ENCODE measurements at regions of chr6 and their contacts with region 1.

Region 1: DNA sequence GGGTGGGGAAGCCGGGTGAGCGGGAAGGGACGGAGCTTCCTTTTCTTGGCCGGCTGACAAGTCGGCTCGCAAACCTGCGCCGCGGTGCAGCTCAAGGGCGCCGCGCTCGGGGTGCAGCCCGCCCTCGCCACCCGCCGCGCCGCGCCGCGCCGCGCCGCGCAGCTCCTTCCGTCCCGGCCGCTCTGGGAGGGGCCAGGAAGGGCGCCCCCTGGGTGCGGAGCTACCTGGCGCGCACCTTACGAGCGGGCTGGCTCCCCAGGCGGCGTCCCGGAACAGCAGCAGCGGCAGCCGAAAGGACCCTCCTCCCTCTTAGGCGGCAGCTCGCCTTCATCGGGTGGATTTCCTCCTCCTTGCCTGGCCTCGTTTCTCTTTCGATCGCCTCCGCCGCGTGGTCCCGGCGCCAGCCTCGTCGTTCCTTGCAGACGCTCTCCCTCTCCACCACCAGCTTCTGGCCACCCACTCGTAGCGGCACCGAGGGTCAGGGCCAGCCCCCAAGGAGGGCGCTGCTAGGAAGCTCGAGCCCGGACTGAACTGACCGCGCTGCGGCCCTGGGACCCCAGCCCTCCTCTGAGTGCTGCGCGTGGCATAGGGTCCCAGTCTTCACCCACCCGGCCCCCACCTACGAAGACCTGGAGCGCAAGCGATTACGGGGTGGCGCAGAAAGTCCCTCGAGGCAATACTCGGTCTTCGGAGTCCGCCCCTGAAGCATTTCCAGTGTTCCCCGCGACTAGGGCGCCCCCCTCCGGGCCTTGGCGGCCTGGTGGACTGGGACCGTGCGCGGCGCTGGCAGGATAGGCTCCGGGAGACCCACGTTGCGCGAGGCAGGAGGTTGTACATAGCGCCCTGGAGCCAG is at the start of gene MAP3K5:
- H3K4me3 ChIP-seq: peak within 1 kb of the TSS; percentile 54
- H3K27ac ChIP-seq: peak within 1 kb of the TSS; percentile 89
- H3K4me1 ChIP-seq: peaks cover 13% of the 10 kb centered on the region
- CTCF ChIP-seq: peak; percentile 96

Region 2: GRCh38 chr6:136599329-136600011 is 193.2 kb before region 1 on chr6:
- CTCF ChIA-PET with region 1: interaction called, 11 read pairs
- POLR2A ChIA-PET with region 1: no interaction called
- H3K4me3 ChIP-seq: no peak overlapping the region
- H3K27ac ChIP-seq: no peak overlapping the region
- H3K4me1 ChIP-seq: no peaks in the 10 kb centered on the region
- CTCF ChIP-seq: no peak

Region 3: GRCh38 chr6:136669299-136669699 is 123.3 kb before region 1 on chr6:
- CTCF ChIA-PET with region 1: interaction called, 16 read pairs
- POLR2A ChIA-PET with region 1: interaction called, 11 read pairs
- H3K4me3 ChIP-seq: no peak overlapping the region
- H3K27ac ChIP-seq: no peak overlapping the region
- H3K4me1 ChIP-seq: peaks cover 9% of the 10 kb centered on the region; the same call in 1 of the 2 replicates
- CTCF ChIP-seq: no peak

Region 4: DNA sequence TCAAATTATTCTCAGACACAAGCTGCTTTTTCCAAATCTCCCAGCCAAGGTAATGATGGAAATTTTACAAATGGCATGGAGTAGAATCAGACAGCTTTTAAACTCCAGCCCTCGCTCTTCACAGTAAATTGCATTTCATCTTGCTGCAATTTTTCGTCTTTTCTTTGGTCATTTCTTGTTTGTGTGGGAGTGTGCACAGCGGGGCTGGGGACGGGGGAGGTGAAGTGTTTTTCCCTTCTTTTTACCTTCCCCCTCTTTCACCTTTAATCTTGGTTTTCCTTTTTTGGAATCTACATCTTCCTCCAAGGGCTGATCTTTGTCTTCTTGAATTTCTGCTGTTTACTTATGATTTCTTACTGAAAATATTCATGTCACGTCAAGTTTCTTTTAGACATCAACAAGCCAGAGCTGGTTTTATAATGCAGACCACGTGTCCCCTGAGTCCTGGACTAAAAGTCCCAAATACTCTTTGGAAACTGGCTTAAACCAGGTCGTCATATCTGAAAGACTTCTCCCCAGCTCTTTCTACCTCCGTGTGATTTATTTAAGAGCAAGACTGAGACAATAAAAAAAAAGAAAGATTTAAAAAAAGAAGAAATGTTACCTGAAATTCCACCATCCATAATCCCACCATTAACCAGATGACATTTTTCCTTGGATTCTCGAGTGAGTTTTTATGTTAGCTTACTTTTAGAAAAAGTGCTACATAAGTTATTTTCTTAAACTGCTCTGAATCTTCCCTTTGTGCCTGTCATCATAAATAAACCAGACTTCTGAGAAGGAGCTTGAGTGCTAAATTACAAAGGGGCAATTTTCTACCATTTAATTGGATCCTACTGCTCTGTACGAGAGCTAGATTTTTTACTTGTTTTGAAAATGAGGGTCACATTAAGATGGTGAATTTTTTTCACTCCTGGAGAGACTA is 52.3 kb before region 1 on chr6:
- CTCF ChIA-PET with region 1: interaction called, 13 read pairs
- POLR2A ChIA-PET with region 1: interaction called, 6 read pairs
- H3K4me3 ChIP-seq: no peak overlapping the region
- H3K27ac ChIP-seq: no peak overlapping the region
- H3K4me1 ChIP-seq: peaks cover 9% of the 10 kb centered on the region
- CTCF ChIP-seq: no peak

Region 5: DNA sequence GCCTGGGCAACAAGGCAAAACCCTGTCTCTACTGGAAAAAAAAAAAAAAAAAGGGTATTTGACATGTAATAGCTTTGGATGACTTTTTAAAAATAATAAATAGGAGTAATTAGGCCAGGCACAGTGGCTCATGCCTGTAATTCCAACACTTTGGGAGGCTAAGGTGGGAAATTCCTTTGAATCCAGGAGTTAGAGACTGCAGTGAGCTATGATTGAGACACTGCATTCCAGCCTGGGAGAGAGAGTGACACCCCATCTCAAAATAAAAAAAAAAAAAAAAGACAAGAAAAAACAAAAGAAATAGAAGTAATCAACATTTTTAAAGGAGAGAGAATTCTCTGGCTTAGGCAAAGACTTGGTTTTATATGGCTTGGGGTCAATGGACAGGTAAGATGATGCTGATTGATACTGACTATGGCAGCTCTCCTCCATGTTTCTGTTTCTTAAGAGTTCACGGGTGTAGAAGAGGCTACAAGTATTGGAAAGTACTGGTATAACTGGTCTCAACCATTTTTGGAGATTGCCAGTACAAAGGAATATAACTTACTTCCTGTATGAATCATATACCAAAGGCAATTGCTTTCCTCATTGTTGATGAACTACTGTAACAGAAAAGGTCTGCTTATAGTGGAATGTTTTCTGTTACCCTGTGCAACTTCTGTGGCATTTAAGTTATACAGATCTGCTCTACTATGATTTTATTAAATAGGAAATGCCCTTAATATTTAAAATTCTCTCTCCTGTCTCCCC is 10.4 kb before region 1 on chr6:
- CTCF ChIA-PET with region 1: interaction called, 29 read pairs
- POLR2A ChIA-PET with region 1: interaction called, 13 read pairs
- H3K4me3 ChIP-seq: no peak overlapping the region
- H3K27ac ChIP-seq: no peak overlapping the region
- H3K4me1 ChIP-seq: peaks cover 7% of the 10 kb centered on the region
- CTCF ChIP-seq: no peak

Region 6: GRCh38 chr6:136846046-136846445 is 53.4 kb after region 1 on chr6:
- CTCF ChIA-PET with region 1: interaction called, 11 read pairs
- POLR2A ChIA-PET with region 1: no interaction called
- H3K4me3 ChIP-seq: no peak overlapping the region
- H3K27ac ChIP-seq: no peak overlapping the region
- H3K4me1 ChIP-seq: no peaks in the 10 kb centered on the region
- CTCF ChIP-seq: no peak

Region 7: GRCh38 chr6:137051790-137052472 is 259.3 kb after region 1 on chr6:
- CTCF ChIA-PET with region 1: no interaction called
- POLR2A ChIA-PET with region 1: no interaction called
- H3K4me3 ChIP-seq: no peak overlapping the region
- H3K27ac ChIP-seq: no peak overlapping the region
- H3K4me1 ChIP-seq: no peaks in the 10 kb centered on the region
- CTCF ChIP-seq: no peak

Measured in HEK293 (cell line).